ENCODE measurements at regions of chr1 and their contacts with region 1.

Region 1: GRCh38 chr1:219660666-219661463 is 48.0 kb upstream of the ZC3H11B start:
- DNase-seq: peak; percentile 92
- ATAC-seq: peak; percentile 92 to 95

Region 2: DNA sequence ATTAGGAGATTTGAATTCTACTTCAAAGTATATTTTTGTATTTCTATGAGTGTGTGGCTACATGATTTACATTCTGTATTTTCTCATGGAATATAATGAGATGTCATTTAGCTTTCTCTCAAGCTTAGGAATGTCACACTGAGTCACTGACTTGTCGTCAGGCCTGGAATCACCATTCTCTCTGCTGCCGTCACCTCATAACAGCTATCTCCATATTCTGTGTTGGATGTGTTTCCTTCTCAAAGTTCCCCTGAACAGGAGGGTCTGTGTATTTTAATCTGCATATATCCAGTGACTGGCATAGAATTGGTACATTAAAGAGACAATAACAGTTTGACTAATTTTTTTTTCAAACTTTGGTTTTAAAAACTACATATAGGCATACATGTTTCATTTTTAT is 451.3 kb before region 1 on chr1:
- intact Hi-C with region 1: loop called in 1 of 2 experiments (anchors 10 kb)
- DNase-seq: no peak
- ATAC-seq: peak; percentile 34 to 68

Region 3: DNA sequence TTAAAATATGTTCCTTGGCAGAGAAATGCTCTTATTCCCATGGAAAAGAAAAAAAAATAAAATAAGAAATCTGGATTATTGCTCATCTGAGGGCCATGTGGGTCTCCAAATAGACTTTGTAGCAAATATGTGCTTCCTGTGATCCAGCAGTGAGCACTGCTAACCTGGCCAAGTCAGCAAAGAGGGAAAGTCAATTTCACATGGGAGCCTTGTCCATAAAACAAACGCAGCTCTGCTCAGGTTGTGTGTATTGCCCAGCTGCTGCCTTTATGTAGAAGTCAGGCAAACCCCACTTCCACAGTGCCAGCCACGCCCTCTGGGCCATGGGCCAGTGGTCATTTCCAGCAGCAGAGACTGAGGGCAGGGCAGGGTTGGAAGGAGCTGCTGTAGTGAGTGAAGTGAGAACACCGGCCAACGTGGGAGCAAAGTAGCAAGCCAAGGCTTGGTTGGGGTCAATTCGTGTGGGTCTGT is 312.9 kb before region 1 on chr1:
- intact Hi-C with region 1: no loop called
- DNase-seq: peak; percentile 50
- ATAC-seq: peak; percentile 81 to 92

Region 4: GRCh38 chr1:219495737-219496408 is 165.0 kb before region 1 on chr1:
- intact Hi-C with region 1: no loop called
- DNase-seq: no peak
- ATAC-seq: no peak

Region 5: DNA sequence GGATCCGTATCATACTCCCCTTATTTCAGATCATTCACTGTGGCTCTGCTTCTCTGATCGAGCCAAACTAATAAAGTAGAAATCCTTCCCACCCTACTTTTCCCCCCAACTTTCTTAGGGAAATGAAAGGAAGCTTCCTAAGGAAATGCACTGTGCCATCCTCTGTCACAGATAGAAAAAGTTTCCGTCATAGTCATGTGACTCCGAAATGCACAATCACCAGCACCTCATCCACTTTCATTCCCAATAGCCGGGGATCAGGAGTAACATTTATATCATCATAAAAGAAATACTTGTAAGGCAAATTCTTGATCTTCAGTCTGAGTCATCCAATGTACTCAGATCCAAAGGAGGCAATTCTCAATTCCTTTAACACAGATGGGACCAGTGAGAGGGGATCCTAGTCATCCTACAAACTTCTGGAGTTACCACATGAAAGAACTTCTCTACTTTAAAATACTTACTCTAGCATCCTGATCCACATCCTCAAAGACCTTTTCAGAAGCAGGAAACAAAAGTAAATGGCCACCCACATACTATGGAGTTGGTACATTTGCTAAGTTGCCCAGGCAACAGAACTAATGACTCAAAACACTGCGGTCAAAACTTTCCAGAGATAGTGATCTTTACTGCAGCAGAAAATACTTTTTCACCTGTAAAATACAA is 49.8 kb after region 1 on chr1:
- intact Hi-C with region 1: no loop called
- DNase-seq: no peak
- ATAC-seq: no peak

Region 6: GRCh38 chr1:219771080-219771479 is 110.2 kb after region 1 on chr1:
- intact Hi-C with region 1: no loop called
- DNase-seq: no peak
- ATAC-seq: peak; percentile 15 to 97

Measured in left cardiac atrium (tissue), 4 donors.